ENCODE measurements at regions of chr2 and their contacts with region 1.

Region 1: GRCh38 chr2:116413659-116414058 is 1400.8 kb upstream of the DDX18 start:
- DNase-seq: no peak
- H3K4me3 ChIP-seq: no peak overlapping the region
- H3K27ac ChIP-seq: no peak overlapping the region
- H3K4me1 ChIP-seq: no peaks in the 10 kb centered on the region
- H3K27me3 ChIP-seq: no peaks in the 10 kb centered on the region
- CTCF ChIP-seq: no peak
- EP300 ChIP-seq: no peak
- POLR2A ChIP-seq: no peak

Region 2: GRCh38 chr2:115075800-115076199 is 1337.9 kb before region 1 on chr2:
- in situ Hi-C with region 1: no loop called
- intact Hi-C with region 1: loop called (anchors 5 kb)
- DNase-seq: no peak
- H3K4me3 ChIP-seq: no peak overlapping the region
- H3K27ac ChIP-seq: no peak overlapping the region
- H3K4me1 ChIP-seq: peaks cover 0 to 5% (median 1%) of the 10 kb centered on the region in 4 donors
- H3K27me3 ChIP-seq: no peaks in the 10 kb centered on the region
- CTCF ChIP-seq: no peak
- EP300 ChIP-seq: no peak
- POLR2A ChIP-seq: no peak

Region 3: GRCh38 chr2:116098049-116098448 is 315.6 kb before region 1 on chr2:
- in situ Hi-C with region 1: no loop called
- intact Hi-C with region 1: no loop called
- DNase-seq: no peak
- H3K4me3 ChIP-seq: no peak overlapping the region
- H3K27ac ChIP-seq: no peak overlapping the region
- H3K4me1 ChIP-seq: no peaks in the 10 kb centered on the region
- H3K27me3 ChIP-seq: no peaks in the 10 kb centered on the region
- CTCF ChIP-seq: no peak
- EP300 ChIP-seq: no peak
- POLR2A ChIP-seq: no peak

Region 4: GRCh38 chr2:116117845-116118244 is 295.8 kb before region 1 on chr2:
- in situ Hi-C with region 1: no loop called
- intact Hi-C with region 1: no loop called
- DNase-seq: no peak
- H3K4me3 ChIP-seq: no peak overlapping the region
- H3K27ac ChIP-seq: no peak overlapping the region
- H3K4me1 ChIP-seq: no peaks in the 10 kb centered on the region
- H3K27me3 ChIP-seq: no peaks in the 10 kb centered on the region
- CTCF ChIP-seq: no peak
- EP300 ChIP-seq: no peak
- POLR2A ChIP-seq: no peak

Region 5: GRCh38 chr2:116517936-116518335 is 104.3 kb after region 1 on chr2:
- in situ Hi-C with region 1: no loop called
- intact Hi-C with region 1: no loop called
- DNase-seq: no peak
- H3K4me3 ChIP-seq: no peak overlapping the region
- H3K27ac ChIP-seq: no peak overlapping the region
- H3K4me1 ChIP-seq: no peaks in the 10 kb centered on the region
- H3K27me3 ChIP-seq: no peaks in the 10 kb centered on the region
- CTCF ChIP-seq: no peak
- EP300 ChIP-seq: no peak
- POLR2A ChIP-seq: no peak

Region 6: DNA sequence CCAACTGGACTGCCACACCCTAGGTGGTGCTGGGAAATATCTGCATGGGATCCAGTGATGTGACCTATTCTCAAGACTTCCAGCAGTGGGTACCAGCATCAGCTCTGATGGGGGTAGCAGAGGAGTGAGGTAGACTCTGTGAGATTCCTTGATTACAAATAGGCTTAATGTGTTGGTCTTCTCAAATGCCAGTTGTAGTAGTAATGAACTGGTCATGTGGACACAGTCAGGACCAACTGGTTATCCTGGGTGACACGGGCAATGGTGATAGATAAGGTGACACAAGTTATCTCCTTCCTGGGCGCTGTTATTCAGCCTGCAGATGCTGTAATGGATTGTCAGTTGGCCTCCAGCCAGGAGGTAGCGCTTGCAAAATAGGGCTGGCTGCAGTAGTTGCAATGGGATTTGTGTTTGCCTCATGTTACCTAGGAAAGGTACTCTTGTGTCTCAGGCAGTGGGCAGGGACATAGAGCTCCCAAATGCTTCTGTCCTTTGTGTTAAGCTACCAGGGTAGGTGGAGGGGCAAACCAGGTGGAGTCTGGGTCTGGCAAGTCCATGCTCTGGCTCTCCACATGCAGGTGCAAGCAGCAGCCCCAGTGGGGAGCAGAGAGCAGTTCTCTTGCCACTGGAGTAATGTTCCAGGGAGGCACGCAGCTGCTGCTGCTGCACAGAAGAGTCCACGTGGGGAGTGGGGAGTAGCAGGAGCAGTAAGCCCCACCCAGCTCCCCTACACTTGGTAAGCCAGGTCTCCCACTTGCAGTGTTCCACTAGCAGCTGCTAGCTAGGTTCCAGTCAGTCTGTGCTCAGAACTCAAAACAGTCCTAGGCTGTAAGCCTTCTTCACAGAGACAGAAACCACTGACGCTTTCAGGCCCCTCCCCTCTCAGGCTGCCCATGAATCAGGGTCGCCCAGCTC is 895.5 kb after region 1 on chr2:
- in situ Hi-C with region 1: no loop called
- intact Hi-C with region 1: no loop called
- DNase-seq: no peak
- H3K4me3 ChIP-seq: no peak overlapping the region
- H3K27ac ChIP-seq: no peak overlapping the region
- H3K4me1 ChIP-seq: no peaks in the 10 kb centered on the region
- H3K27me3 ChIP-seq: no peaks in the 10 kb centered on the region
- CTCF ChIP-seq: no peak
- EP300 ChIP-seq: no peak
- POLR2A ChIP-seq: no peak